ENCODE measurements at regions of chr4 and their contacts with region 1.

Region 1: GRCh38 chr4:183659029-183659871 is at the starts of genes RWDD4 and TRAPPC11:
- DNase-seq: peak; percentile 98
- ATAC-seq: peak; percentile 100
- total RNA-seq, gene RWDD4: 14.7 to 16.6 TPM
- total RNA-seq, gene TRAPPC11: 19.5 to 21.6 TPM

Region 2: DNA sequence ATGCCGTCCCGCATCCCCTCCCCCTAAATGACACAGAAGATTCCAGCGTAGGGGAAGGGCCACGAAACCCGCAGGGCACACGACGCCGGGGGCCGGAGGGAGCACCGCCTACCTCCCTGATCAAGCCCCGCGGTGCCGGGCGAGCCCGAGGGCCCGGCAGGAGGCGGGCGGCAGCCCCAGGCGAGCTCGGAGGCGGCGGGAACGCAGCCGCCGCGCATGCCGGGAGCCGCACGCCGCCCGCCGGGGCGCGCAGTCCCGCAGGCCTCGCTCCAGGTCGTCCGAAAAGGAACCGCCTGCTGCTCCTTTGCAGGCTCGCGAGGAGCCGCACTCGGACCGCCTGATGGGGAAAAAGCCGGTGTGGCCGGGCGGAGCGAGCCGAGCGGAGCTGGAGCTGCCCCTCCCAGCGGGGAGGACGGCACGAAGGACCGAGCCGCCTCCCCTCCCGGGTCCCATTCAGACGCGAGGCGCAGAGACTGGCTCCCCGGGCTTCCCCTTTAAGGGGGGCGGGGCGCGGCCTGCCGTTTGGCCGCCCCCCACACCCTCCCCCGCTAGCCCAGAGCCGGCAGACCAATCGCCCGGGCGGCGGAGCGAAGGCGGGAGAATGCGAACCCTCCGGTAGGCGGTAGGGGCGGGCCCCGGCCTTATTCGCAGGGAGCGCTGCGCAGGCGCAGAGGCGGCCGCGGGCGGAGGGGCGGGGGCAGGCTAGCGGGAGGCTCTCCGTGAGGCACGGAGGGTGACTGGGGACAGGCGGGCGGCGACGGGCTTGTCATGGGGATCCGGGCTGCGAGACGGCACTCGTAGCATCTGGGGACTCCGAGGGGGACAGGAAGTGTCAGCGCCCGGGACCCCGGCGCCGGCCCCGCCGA is 155.0 kb before region 1 on chr4:
- intact Hi-C with region 1: loop called in 1 of 2 experiments (anchors 10 kb)
- DNase-seq: peak; percentile 100
- ATAC-seq: peak; percentile 94 to 97

Measured in left cardiac atrium (tissue), 4 donors.